Activated CD4-positive, alpha-beta memory T cell treated with anti-CD3 and anti-CD28 coated beads, Interleukin-2, amount 10 ng/mL, durations not matched to agents 7 days and 5 days (primary cell): ENCODE measurements at regions of chr1 and their contacts with region 1.

Region 1: DNA sequence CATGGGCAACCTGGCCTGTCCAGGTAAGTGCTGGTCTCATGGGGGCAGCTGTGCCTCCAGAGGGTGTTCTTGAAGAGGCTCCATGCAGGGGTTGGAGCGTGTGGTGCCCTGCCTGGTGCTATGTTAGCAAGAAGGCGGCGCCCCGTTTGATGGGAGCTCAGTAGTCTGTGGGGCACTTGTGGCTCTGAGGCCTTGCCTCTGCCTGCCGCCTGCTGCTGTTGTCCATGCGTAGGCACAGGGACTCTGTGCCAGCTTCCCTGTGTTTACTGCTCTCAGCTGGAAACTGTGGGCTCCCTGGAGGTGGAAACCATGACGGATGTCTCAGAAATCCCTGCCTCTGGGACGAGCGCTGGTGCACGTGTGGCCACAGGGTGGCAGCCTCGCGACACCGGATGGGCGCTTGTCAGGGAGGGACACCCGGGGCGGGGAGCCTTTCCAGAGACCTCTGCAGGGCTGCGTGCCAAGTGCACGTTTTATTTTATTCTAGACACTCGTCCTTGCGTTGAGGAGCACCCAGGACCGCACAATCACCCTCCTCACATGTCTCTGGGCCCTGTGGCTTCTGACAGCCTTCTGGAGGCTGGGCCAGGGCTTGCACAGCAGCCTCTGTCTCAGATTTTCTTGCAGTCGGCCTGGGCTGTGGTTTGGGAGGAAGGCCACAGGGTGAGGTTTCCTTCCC is 27.1 kb downstream of the SNAP47 start:
- DNase-seq: peak; percentile 95
- H3K4me3 Mint-ChIP-seq: peak overlapping the region; percentile 46
- H3K27ac Mint-ChIP-seq: peak overlapping the region; percentile 94
- H3K4me1 Mint-ChIP-seq: peaks cover 99% of the 10 kb centered on the region
- H3K27me3 Mint-ChIP-seq: no peaks in the 10 kb centered on the region

Region 2: GRCh38 chr1:227774051-227774731 is 11.8 kb after region 1 on chr1:
- CTCF ChIA-PET with region 1: interaction called, 11 read pairs
- POLR2A ChIA-PET with region 1: interaction called, 6 read pairs
- DNase-seq: peak; percentile 56
- H3K4me3 Mint-ChIP-seq: no peak overlapping the region
- H3K27ac Mint-ChIP-seq: peak overlapping the region; percentile 78
- H3K4me1 Mint-ChIP-seq: peaks cover 42% of the 10 kb centered on the region
- H3K27me3 Mint-ChIP-seq: no peaks in the 10 kb centered on the region

Region 3: DNA sequence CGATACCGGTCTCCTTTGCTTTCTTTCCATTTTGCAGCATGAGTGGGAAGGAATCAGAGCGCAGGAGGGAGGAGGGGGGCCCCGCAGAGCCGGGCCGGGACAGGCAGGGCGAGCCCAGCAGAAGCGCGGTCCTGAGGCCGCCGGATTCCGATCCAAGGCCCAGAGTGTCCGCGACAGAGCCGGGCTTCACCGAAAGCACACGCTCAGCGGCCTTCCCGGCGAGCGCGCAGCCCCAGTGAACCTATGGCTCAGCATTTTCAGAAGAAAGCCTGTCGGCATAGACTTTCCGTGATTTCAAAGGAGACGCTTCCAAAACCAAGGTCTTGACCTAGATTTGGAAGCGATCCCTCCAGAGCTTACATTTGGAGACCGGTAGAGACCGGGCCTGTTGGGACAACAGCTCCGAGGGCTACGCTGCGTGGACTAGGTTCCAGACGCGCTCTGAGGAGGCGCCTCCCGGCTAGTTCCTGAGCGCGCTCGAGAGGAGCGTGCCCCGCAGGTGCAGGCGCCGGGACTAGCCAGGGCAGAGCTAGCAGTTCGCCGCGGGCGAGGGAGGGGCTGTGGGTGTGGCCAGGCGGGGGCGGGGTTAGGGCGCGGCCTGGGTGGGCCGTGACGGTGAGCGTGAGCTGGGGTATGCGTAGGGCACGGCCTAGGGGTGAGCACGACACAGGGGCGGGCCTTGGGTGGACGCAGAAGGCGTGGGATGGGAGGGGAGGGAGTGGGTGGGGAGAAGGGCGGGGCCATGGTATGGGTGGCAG is 25.3 kb after region 1 on chr1:
- CTCF ChIA-PET with region 1: interaction called, 13 read pairs
- POLR2A ChIA-PET with region 1: interaction called, 9 read pairs
- DNase-seq: peak; percentile 96
- H3K4me3 Mint-ChIP-seq: peak overlapping the region; percentile 75
- H3K27ac Mint-ChIP-seq: peak overlapping the region; percentile 52
- H3K4me1 Mint-ChIP-seq: peaks cover 13% of the 10 kb centered on the region
- H3K27me3 Mint-ChIP-seq: peaks cover 5% of the 10 kb centered on the region

Region 4: GRCh38 chr1:227951624-227952373 is 189.4 kb after region 1 on chr1:
- CTCF ChIA-PET with region 1: interaction called, 34 read pairs
- POLR2A ChIA-PET with region 1: interaction called, 4 read pairs
- DNase-seq: no peak
- H3K4me3 Mint-ChIP-seq: no peak overlapping the region
- H3K27ac Mint-ChIP-seq: no peak overlapping the region
- H3K4me1 Mint-ChIP-seq: peaks cover 9% of the 10 kb centered on the region
- H3K27me3 Mint-ChIP-seq: peaks cover 44% of the 10 kb centered on the region